ENCODE measurements at regions of chr12 and their contacts with region 1.

Region 1: GRCh38 chr12:2944401-2945047 is 14.7 kb upstream of the TEAD4 start:
- DNase-seq: peak in 9 of 10 donors; percentile 19 to 93 (median 71)

Region 2: DNA sequence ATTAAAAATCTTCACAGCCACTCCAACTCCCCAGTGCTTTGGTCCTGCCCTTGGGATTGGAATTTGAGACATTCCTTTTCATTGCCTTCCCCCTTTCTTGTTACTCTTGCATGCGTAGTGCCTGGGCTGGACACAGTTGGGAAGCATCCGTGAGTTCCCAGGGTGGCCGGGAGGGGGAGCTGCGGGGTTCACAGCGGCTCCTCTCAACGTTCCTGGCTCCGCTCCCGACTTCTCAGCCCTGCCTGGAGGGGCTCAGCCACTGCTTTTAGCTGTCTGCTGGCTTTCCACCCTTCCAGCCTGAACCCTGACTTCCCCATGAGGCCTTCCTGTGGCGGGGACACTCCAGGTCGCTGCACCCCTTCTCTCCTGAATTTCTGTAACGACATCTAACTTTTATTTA is 90.9 kb before region 1 on chr12:
- intact Hi-C with region 1: loop called (anchors 1 kb)
- DNase-seq: peak; percentile 67 to 97 (median 86)

Region 3: DNA sequence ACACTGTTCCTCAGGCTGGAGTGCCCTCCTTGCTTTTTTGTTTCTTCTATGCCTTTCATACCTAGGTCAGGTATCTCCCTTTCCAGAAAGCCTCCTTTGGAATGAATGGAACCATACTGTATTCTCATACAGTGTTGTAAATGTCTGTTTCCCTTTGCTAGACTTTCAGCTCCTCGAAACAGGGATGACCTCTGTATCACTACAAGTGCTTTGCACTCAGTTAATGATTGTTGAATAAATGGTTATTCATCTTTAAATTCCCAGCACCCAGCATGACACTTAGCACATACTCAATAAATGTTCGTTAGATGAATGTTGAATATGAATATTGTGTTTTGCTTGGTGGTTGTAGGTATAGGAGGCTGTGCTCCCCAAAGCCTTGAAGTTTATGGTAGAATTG is 59.7 kb before region 1 on chr12:
- intact Hi-C with region 1: loop called (anchors 1 kb)
- DNase-seq: no peak

Region 4: GRCh38 chr12:3020850-3021435 is 76.4 kb after region 1 on chr12:
- intact Hi-C with region 1: no loop called
- DNase-seq: no peak

Region 5: GRCh38 chr12:3049611-3050249 is 105.2 kb after region 1 on chr12:
- intact Hi-C with region 1: no loop called
- DNase-seq: peak in 1 of 10 donors; percentile 35

Measured in posterior cingulate gyrus (tissue), 11 donors.